ENCODE measurements at regions of chr11 and their contacts with region 1.

Region 1: DNA sequence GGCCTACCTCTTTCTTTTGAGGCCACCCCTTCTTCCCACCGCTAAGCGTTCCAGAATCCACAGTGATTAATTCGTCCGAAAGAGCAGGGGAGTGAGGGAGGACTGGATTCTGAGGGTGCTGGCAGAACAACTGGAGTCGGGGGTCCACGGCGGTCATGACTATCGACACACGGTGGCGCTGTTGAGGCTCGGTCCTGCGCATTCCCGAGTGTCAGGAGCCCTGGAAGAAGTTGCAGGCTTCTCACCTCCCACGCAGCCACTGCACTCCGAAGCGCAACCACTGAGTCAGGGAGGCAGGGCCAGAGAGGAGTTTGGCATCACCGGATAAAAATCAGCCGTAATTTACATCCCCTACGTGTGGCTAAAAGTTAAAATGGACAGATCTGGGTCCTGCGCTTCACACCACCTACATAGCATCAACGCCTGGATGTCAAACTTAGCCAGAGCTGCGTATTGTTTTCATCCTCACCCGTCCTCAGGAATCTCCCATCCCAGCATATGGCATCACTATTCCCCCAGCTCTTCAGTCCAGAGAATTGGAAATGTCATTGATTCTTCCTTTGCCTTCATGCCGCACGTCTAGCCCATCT is 10.7 kb upstream of the CTSF start:
- DNase-seq: peak; percentile 62 to 87
- ATAC-seq: peak; percentile 93 to 95
- H3K4me3 ChIP-seq: no peak overlapping the region
- H3K27ac ChIP-seq: no peak overlapping the region
- H3K4me1 ChIP-seq: peaks cover 9% of the 10 kb centered on the region
- CTCF ChIP-seq: peak; percentile 69
- EP300 ChIP-seq: no peak
- POLR2A ChIP-seq: no peak
- RAD21 ChIP-seq: peak; percentile 67 to 73

Region 2: DNA sequence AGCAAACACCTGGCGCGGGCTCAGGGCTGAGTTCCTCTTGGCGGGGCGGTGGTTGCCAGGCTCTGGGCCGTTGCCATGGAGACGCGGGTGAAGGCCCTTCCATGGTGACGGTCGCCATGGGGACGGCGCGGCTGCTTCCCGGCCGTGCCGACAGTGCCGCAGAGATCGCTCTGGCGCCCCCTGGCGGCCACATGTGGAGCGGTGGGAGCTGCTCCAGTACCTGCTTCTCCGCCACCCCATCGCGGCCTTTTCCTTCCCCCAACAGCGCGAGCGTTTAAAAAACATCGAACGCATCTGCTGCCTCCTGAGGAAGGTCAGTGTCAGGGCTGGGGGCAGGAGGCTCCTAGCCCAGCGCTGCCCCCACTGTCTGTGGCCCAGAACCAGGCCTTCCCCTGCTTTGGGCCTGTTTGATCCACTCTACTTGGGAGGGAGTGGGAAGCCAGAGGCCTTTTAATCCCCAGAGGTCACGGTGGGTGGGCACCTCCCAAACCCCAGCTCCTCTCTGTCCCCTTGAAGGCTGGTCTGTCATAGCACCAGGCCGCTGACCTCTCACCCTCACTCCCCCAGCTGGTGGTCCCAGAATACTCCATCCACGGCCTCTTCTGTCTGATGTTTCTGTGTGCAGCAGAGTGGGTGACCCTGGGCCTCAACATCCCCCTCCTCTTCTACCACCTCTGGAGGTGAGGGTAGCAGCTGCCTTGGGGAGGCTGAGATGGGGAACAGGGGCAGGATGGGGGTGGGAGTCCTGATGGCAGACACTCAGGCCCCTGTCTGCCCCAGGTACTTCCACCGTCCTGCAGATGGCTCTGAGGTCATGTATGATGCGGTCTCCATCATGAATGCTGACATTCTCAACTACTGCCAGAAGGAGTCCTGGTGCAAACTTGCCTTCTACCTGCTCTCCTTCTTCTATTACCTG is 296.4 kb before region 1 on chr11:
- CTCF ChIA-PET with region 1: no interaction called
- POLR2A ChIA-PET with region 1: no interaction called
- DNase-seq: peak; percentile 89 to 96
- ATAC-seq: peak; percentile 58 to 89
- H3K4me3 ChIP-seq: no peak overlapping the region
- H3K27ac ChIP-seq: peak overlapping the region in 1 of 2 experiments; percentile 55; a peak in 2 of 6 replicates
- H3K4me1 ChIP-seq: peaks cover 32% of the 10 kb centered on the region
- CTCF ChIP-seq: peak; percentile 90
- EP300 ChIP-seq: no peak
- POLR2A ChIP-seq: no peak
- RAD21 ChIP-seq: peak; percentile 51 to 53

Region 3: GRCh38 chr11:66407651-66408050 is 171.5 kb before region 1 on chr11:
- CTCF ChIA-PET with region 1: no interaction called
- POLR2A ChIA-PET with region 1: no interaction called
- DNase-seq: no peak
- ATAC-seq: no peak
- H3K4me3 ChIP-seq: no peak overlapping the region
- H3K27ac ChIP-seq: no peak overlapping the region
- H3K4me1 ChIP-seq: no peaks in the 10 kb centered on the region
- CTCF ChIP-seq: no peak
- EP300 ChIP-seq: no peak
- POLR2A ChIP-seq: no peak
- RAD21 ChIP-seq: no peak

Region 4: GRCh38 chr11:66529655-66530054 is 49.5 kb before region 1 on chr11:
- CTCF ChIA-PET with region 1: no interaction called
- POLR2A ChIA-PET with region 1: no interaction called
- DNase-seq: no peak
- ATAC-seq: no peak; a peak in 3 of 6 replicates
- H3K4me3 ChIP-seq: no peak overlapping the region
- H3K27ac ChIP-seq: no peak overlapping the region
- H3K4me1 ChIP-seq: no peaks in the 10 kb centered on the region
- CTCF ChIP-seq: no peak
- EP300 ChIP-seq: no peak
- POLR2A ChIP-seq: no peak
- RAD21 ChIP-seq: no peak

Region 5: DNA sequence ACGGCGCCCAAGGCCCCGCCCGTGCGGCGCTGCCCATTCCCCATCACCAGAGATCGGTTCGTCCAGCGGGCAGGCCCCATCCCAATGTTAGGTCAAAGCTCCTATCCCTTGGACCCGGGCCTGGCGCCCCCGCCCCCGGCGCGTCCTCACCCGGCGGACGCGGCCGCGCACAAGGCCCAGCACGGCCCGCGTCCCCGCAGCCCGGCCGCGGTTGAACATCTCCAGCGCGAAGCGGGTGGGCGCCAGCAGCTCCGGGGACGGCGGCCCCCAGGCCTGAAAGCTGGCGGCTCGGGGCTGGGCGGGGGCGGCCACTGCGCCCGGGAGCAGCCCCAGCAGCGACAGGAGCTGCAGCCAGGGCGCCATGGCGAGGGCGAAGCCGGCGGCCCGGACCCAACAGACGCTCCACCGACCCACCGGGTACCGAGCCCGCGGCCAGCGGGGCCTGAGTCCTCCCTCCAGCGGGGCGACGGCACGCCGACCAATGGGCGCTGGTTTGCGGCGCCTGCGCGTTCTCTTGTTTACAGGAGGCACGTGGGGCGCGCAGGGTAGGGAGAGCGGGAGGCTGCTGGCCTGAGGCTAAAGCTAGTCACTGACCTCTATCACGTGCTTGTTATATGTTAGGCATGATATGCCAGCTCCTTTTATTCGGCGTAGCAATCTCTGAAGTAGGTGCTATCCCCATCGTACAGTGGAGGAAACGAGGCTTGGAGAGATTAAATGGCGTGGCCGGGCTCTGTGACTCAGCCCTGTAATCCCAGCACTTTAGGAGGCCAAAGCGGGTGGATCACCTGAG is 10.8 kb before region 1 on chr11 and contains the start of gene CTSF:
- CTCF ChIA-PET with region 1: interaction called, 15 read pairs
- POLR2A ChIA-PET with region 1: no interaction called
- DNase-seq: peak; percentile 83 to 97
- ATAC-seq: peak; percentile 92 to 95
- H3K4me3 ChIP-seq: peak within 1 kb of the TSS; percentile 68
- H3K27ac ChIP-seq: peak within 1 kb of the TSS; percentile 80 to 87
- H3K4me1 ChIP-seq: peaks cover 5% of the 10 kb centered on the region; the same call in 1 of the 3 replicates
- CTCF ChIP-seq: no peak
- EP300 ChIP-seq: no peak
- POLR2A ChIP-seq: peak; percentile 53
- RAD21 ChIP-seq: no peak
- polyA plus RNA-seq, gene CTSF: 19.2 and 29.1 TPM in 2 replicates

Measured in A549 (cell line).